Activated naive CD4-positive, alpha-beta T cell treated with anti-CD3 and anti-CD28 coated beads, Interleukin-2, amount 10 ng/mL, durations not matched to agents 7 days and 5 days (primary cell): ENCODE measurements at regions of chr1 and their contacts with region 1.

Region 1: DNA sequence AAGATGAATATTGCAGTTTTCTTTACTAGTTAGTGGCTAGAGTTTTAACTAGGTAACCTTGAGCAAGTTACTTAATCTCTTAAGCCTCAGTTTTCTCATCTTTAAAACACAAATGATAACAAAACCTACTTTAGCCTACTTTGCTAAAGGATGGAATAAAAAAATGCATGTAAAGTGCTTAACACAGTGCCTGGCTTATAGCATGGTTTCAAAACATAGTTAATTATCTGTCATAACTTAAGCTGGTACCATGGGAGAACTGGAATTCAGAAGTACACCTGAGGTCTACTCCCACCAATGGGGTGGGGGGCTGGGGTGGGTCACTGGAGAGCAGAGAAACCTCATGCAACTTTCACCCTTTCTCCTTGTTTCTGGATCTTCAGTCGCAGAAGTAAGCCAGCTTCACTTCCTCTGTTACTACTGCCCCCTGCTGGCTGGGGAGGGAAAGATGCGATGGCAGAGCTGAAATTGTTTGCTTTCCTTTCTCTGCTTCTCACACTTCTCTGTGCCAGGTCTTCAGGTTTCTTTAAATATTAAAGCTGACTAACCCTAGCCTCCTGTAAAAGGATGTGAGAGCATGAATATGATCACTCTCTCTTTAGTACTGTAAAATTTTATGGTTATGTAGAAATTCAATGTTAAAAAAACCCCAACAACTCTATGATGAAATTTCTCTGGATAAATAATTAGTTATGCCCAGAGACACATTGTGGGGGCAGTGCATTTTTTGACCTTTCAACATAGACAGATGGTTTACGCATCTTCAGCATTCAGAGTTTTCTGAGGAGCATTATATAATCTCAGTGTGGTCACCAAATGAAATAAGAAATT is 324.2 kb downstream of the HLX start:
- DNase-seq: peak; percentile 72
- H3K4me3 Mint-ChIP-seq: no peak overlapping the region
- H3K27ac Mint-ChIP-seq: no peak overlapping the region
- H3K4me1 Mint-ChIP-seq: no peaks in the 10 kb centered on the region
- H3K27me3 Mint-ChIP-seq: peaks cover 4% of the 10 kb centered on the region

Region 2: GRCh38 chr1:220810179-220810653 is 393.2 kb before region 1 on chr1:
- CTCF ChIA-PET with region 1: interaction called, 19 read pairs
- DNase-seq: peak; percentile 78
- H3K4me3 Mint-ChIP-seq: peak overlapping the region; percentile 35
- H3K27ac Mint-ChIP-seq: no peak overlapping the region
- H3K4me1 Mint-ChIP-seq: peaks cover 6% of the 10 kb centered on the region
- H3K27me3 Mint-ChIP-seq: peaks cover 21% of the 10 kb centered on the region

Region 3: GRCh38 chr1:220873868-220874655 is 329.4 kb before region 1 on chr1:
- CTCF ChIA-PET with region 1: interaction called, 16 read pairs
- DNase-seq: peak; percentile 39
- H3K4me3 Mint-ChIP-seq: no peak overlapping the region
- H3K27ac Mint-ChIP-seq: no peak overlapping the region
- H3K4me1 Mint-ChIP-seq: peaks cover 23% of the 10 kb centered on the region
- H3K27me3 Mint-ChIP-seq: peaks cover 59% of the 10 kb centered on the region